Head of caudate nucleus (tissue), 42 donors: ENCODE measurements at regions of chr18 and their contacts with region 1.

Region 1: DNA sequence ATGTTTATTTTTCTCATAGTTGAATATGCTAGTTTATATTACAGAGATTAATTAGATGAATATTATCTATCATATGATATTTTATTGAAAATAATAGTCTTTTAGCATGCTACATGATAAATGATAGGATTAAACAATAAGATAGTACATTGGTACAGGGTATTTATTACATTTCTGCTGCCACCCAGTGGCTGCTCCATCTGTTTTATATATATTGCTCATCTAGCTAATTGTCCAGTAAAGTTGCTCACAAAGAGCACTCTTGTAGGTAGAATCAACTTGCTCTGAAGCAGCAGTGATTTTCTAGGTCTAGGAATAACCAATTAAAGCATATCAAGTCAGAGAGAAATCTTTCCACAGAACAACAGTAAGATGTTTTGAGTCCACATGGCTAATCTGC is 183.3 kb downstream of the ASXL3 start:
- DNase-seq: peak in 35 of 42 donors; percentile 18 to 85 (median 55)

Region 2: GRCh38 chr18:33231474-33232317 is 529.7 kb before region 1 on chr18:
- intact Hi-C with region 1: loop called (anchors 5 kb)
- DNase-seq: peak; percentile 40 to 92 (median 80)